Activated naive CD4-positive, alpha-beta T cell treated with anti-CD3 and anti-CD28 coated beads, Interleukin-2, amount 10 ng/mL, durations not matched to agents 7 days and 5 days (primary cell): ENCODE measurements at regions of chr4 and their contacts with region 1.

Region 1: GRCh38 chr4:15963001-15963451 is at the start of gene FGFBP2:
- DNase-seq: peak; percentile 74
- H3K4me3 Mint-ChIP-seq: peak within 1 kb of the TSS; percentile 55
- H3K27ac Mint-ChIP-seq: no peak within 1 kb of the TSS
- H3K4me1 Mint-ChIP-seq: peaks cover 27% of the 10 kb centered on the region
- H3K27me3 Mint-ChIP-seq: peaks cover 21% of the 10 kb centered on the region

Region 2: DNA sequence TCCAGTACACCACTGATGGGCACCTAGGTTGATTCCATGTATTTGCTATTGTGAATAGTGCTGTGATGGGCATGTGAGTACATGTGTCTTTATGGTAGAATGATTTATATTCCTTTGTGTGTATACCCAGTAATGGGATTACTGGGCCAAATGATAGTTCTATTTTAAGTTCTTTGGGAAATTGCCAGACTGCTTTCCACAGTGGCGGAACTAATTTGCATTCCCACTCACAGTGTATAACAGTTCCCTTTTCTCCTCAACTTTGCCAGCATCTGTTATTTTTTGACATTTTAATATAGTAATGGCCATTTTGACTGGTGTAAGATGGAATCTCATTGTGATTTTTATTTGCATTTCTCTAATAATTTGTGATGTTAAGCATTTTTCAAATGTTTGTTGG is 467.4 kb before region 1 on chr4:
- CTCF ChIA-PET with region 1: no interaction called
- DNase-seq: no peak
- H3K4me3 Mint-ChIP-seq: no peak overlapping the region
- H3K27ac Mint-ChIP-seq: no peak overlapping the region
- H3K4me1 Mint-ChIP-seq: no peaks in the 10 kb centered on the region
- H3K27me3 Mint-ChIP-seq: peaks cover 1% of the 10 kb centered on the region

Region 3: DNA sequence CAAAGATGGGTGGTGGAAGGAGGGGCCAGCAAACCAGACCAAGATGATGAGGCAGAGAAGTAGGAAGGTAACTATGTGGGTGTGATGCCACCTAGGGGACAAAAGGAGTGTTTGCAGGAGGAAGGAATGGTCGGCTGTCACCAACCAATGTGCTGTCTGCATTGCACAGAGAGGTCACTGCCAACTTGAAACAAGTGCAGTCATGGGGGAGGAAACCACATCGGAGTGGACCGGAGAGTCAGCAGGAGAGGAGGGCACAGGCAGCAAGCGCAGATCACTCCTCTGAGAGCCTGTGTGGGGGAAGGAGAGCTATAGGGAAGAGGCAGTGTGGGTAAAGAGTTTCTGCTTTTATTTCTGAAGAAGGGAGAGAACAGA is 38.4 kb after region 1 on chr4:
- CTCF ChIA-PET with region 1: interaction called, 19 read pairs
- DNase-seq: peak; percentile 58
- H3K4me3 Mint-ChIP-seq: no peak overlapping the region
- H3K27ac Mint-ChIP-seq: no peak overlapping the region
- H3K4me1 Mint-ChIP-seq: no peaks in the 10 kb centered on the region
- H3K27me3 Mint-ChIP-seq: peaks cover 18% of the 10 kb centered on the region